ENCODE measurements at regions of chr22 and their contacts with region 1.

Region 1: DNA sequence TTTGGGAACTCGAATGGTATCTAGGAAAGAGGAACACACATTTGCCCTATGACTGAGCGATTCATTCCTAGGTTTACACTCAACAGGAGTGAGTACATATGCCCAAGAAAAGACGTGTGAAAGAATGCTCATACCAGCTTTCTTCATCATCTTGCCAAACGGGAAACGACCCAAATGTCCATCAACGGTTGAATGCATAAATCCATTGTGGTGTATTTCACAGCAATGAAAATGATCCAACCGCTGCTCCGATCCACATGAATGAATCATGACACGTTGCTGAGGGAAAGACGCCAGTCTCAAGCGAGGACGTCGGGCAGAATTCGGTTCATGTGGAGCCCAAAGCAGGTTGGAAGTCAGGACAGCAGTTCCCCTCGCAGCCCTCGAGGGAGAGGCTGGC is 71.5 kb downstream of the CYTH4 start:
- DNase-seq: no peak
- ATAC-seq: no peak
- H3K4me3 ChIP-seq: no peak overlapping the region
- H3K4me3 Mint-ChIP-seq: no peak overlapping the region
- H3K27ac ChIP-seq: no peak overlapping the region
- H3K27ac Mint-ChIP-seq: no peak overlapping the region
- H3K4me1 ChIP-seq: no peaks in the 10 kb centered on the region
- H3K4me1 Mint-ChIP-seq: no peaks in the 10 kb centered on the region
- H3K27me3 ChIP-seq: no peaks in the 10 kb centered on the region
- H3K27me3 Mint-ChIP-seq: no peaks in the 10 kb centered on the region
- CTCF ChIP-seq: no peak

Region 2: DNA sequence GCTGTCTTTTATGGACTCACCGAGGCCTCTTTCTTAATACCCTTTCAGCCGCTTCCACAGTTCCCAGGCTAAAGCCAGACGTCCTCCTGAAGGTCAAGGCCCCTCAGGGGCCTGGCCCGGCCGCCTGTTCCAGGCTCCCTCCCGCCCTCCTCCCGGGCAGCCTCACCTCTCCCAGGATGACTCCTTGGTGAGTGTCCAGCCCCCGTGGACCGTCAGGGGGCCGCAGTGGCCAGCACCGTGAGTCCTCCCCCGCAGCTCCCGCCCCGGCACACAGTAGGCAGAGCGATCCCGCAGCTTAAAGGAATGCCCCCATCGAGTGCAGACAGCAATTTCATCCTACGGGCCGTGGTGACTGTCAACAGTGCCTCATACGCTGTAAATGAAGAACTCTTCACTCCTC is 40.5 kb after region 1 on chr22:
- CTCF ChIA-PET with region 1: no interaction called
- POLR2A ChIA-PET with region 1: no interaction called
- intact Hi-C with region 1: loop called in 1 of 2 experiments (anchors 5 kb)
- DNase-seq: no peak
- ATAC-seq: no peak
- H3K4me3 ChIP-seq: no peak overlapping the region
- H3K4me3 Mint-ChIP-seq: no peak overlapping the region
- H3K27ac ChIP-seq: no peak overlapping the region
- H3K27ac Mint-ChIP-seq: no peak overlapping the region
- H3K4me1 ChIP-seq: no peaks in the 10 kb centered on the region
- H3K4me1 Mint-ChIP-seq: no peaks in the 10 kb centered on the region
- H3K27me3 ChIP-seq: peaks cover 0 to 5% of the 10 kb centered on the region in 2 experiments
- H3K27me3 Mint-ChIP-seq: peaks cover 9% of the 10 kb centered on the region
- CTCF ChIP-seq: no peak

Measured in CD4-positive, alpha-beta T cell (primary cell).